Breast epithelium (tissue), 4 donors: ENCODE measurements at regions of chr16 and their contacts with region 1.

Region 1: GRCh38 chr16:5003211-5003610 is 30.5 kb downstream of the NAGPA start:
- DNase-seq: no peak
- H3K4me3 ChIP-seq: no peak overlapping the region
- H3K27ac ChIP-seq: no peak overlapping the region
- H3K4me1 ChIP-seq: no peaks in the 10 kb centered on the region
- H3K27me3 ChIP-seq: no peaks in the 10 kb centered on the region
- CTCF ChIP-seq: no peak
- POLR2A ChIP-seq: no peak

Region 2: GRCh38 chr16:4984174-4985000 is 18.8 kb before region 1 on chr16:
- intact Hi-C with region 1: loop called (anchors 1 kb)
- DNase-seq: no peak
- H3K4me3 ChIP-seq: no peak overlapping the region
- H3K27ac ChIP-seq: no peak overlapping the region
- H3K4me1 ChIP-seq: no peaks in the 10 kb centered on the region
- H3K27me3 ChIP-seq: peaks cover 0 to 20% of the 10 kb centered on the region in 2 donors
- CTCF ChIP-seq: no peak
- POLR2A ChIP-seq: no peak